ENCODE measurements at regions of chr15 and their contacts with region 1.

Region 1: DNA sequence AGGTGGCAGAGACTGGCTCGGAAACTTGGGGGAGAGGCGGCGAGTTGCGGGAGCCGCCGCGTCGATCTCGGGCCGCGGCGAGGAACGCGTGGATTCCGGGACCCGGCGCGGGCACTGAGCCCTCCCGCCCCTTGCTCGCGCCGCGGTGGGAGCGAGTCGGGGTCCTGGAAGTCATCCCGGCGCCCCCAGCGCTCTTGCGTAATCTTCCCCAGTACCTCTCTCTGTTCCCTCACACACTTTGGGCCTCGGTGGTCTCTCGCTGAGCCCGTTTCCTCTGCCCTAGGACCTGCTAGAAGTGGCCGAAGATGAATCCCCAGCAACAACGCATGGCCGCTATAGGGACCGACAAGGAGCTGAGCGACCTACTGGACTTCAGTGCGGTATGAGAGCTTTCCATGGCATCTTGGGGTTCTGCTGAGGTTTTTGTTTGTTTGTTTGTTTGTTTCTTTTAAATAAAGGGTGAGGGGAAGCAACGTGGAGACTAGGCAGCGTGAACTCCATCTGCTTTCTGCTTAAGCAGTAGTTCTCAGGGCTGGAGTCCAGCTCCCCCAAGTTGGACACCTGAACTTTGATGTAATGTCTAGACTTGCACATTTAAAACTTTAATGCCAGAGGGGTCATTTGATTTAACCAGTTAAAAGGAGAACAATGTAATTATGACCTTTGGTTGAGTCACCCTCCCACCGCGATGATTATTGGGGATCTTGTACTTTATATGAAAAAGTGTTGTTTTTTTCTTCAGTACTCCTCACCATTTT is 1.3 kb downstream of the TCF12 start:
- DNase-seq: peak; percentile 38
- H3K27ac ChIP-seq: peak overlapping the region; percentile 89
- CTCF ChIP-seq: no peak

Region 2: DNA sequence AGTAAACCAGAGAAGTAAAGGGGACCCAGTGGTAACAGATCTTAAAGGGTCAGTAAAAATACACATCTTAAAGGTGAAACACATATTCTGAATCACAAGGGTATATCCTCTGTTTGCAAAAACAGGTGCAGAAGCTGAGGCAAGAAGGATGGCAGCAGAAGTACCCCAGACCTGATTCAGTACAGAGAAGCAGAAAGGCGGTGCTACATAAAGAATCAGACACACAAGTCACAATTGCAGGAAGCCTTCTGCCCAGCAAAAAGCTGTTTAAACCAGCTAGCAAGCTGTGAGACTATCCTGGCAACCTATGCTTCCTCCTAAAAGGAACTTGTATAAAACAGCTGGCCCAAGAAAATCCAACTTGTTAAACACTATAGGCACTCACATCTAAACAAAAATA is 235.9 kb before region 1 on chr15:
- CTCF ChIA-PET with region 1: no interaction called
- POLR2A ChIA-PET with region 1: no interaction called
- DNase-seq: no peak
- H3K27ac ChIP-seq: no peak overlapping the region
- CTCF ChIP-seq: no peak

Region 3: DNA sequence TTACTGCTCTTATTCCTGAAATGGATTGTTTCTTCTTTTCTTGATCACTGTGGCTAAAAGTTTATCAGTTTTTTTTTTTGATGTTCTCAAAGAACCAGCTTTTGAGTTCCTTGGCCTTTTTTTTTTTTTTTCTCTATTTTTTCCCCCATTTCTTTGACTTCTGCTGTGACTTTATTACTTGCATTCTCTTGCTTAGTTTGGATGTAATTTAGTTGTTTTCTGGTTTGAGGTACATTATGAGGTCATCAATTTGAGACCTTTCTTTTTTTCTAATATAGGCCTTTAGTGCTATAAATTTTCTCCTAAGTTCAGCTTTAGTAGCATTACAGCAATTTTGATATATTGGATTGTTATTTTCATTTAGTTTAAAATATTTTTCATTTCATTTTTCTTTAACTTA is 34.0 kb after region 1 on chr15:
- CTCF ChIA-PET with region 1: no interaction called
- POLR2A ChIA-PET with region 1: interaction called, 15 read pairs
- DNase-seq: no peak
- H3K27ac ChIP-seq: no peak overlapping the region
- CTCF ChIP-seq: no peak

Measured in RWPE1 (cell line).